ENCODE measurements at regions of chr18 and their contacts with region 1.

Region 1: GRCh38 chr18:38397094-38397493 is 831.5 kb upstream of the CELF4 start:
- DNase-seq: no peak
- H3K4me3 ChIP-seq: no peak overlapping the region
- CTCF ChIP-seq: no peak

Region 2: DNA sequence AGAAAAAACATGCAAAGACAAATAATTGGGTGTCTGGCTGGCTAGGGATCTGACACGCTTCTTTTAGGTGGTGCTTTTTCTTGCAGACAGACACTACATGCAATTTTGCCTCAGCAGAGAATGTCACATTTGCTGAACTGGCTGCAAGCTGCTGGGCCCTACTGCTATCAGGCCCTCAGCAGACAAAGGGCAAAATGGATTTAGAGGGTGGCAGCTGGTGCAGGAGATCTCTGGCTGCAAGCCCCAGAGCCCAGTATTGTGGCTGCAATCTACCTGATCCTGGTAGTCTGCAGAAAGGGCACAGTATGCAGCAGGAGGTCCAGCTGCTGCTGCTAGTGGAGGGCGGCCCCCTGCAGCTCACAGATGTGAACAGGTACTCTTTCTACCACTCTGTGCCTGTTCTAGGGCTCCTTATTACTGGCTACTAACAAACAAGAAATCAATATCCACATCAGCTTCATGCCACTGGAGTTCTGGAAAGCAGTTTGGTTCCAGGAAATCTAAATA is 34.8 kb before region 1 on chr18:
- in situ Hi-C with region 1: loop called (anchors 5 kb)
- DNase-seq: no peak
- H3K4me3 ChIP-seq: no peak overlapping the region
- CTCF ChIP-seq: no peak

Region 3: DNA sequence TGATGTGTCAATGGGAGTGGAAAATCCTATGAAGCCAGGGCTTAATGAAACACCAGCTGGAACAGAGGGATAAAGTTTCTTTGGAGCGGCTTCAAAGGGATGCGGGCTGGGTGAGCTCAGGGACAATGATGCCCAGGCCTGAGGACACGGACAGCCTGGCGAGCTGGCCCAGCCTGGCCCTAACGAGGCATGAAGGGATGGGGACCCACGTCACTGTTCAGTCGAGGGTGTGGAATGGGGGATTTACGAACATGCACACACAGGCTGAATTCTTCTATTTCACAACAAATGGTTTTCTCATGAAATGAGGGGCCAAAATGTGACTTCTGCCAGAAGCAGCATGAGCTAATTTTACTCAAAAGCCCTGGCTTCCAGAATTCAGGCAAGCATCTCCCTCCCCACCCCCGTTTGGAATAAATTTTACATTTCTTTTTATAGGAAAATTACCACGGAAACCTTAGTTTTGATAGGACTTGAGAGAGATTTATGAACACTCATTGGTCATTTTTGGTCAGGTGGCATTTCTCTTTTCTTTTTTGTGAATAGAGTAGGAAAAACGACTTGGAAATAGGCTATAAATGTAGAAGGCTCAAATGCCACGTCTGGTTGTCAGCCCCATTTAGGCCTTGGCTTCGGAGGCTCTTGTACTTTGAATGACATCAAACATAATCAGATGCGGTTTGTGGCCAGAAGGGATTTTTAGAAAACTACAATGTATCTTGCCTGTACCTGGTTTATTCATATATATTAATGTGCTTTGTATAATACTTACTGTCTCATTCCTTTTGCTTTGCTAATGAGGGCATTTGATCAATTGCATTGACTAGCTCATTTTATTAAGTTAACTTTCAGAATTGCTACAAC is 62.3 kb after region 1 on chr18:
- in situ Hi-C with region 1: no loop called
- DNase-seq: no peak
- H3K4me3 ChIP-seq: no peak overlapping the region
- CTCF ChIP-seq: no peak